Calu3 (cell line): ENCODE measurements at regions of chr1 and their contacts with region 1.

Region 1: DNA sequence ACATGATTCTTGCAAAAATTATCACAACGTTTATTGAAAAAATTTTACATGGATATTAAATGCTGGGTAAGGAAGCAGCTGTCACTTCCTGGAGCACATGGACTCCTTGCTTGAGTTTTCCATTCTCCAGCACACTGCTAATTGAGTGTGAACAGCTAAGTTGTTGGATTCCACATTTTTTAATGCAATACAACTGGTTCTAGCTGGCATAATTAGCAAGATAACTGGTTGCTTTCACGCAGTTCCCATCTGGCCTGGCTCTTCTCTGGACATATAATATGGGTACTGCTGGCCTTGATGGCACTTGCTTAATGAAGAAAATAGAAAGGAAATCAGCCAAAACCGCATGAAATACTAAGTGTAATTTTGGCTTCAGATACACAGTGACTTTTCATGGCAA is 26.6 kb downstream of the RGS21 start:
- DNase-seq: no peak
- H3K4me3 Mint-ChIP-seq: no peak overlapping the region
- H3K27ac Mint-ChIP-seq: no peak overlapping the region
- H3K4me1 Mint-ChIP-seq: no peaks in the 10 kb centered on the region
- H3K27me3 Mint-ChIP-seq: no peaks in the 10 kb centered on the region
- CTCF ChIP-seq: no peak

Region 2: DNA sequence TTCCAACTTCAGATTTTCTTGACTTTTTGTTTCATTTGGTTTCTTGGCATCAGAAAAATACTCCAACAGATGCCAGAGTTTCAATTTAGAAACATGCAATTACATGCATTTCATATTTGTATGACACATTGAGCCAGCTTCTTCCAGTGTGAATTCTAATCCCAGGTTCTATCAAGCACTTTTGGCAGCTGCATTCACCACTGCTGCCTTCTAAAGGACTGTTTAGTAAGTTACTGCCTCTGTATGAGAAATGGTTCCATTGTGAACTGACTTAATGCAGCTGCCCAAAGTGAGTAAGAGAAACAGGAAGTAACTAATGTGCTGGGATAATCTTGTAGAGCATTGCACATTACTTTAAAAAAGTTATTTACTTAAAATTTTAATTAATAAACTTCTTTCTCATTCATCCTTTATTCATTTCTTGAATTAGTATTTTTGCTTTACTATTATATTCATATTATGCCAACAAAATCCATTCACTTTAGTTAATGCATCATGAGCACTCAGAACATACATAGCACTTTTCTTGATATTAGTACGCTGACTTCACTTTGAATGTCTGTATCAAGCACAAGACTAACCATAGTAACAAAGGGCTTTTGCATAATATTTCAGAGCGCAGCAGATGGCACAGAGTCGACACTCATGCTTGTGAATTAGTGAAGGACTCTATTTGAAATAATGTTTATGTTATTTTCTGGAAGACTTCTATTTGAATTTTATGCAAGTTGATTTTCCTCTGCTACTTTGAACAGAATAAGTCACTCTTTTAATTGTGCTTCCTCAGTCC is 175.2 kb before region 1 on chr1:
- CTCF ChIA-PET with region 1: no interaction called
- intact Hi-C with region 1: no loop called
- DNase-seq: no peak
- H3K4me3 Mint-ChIP-seq: no peak overlapping the region
- H3K27ac Mint-ChIP-seq: no peak overlapping the region
- H3K4me1 Mint-ChIP-seq: no peaks in the 10 kb centered on the region
- H3K27me3 Mint-ChIP-seq: no peaks in the 10 kb centered on the region
- CTCF ChIP-seq: no peak

Region 3: DNA sequence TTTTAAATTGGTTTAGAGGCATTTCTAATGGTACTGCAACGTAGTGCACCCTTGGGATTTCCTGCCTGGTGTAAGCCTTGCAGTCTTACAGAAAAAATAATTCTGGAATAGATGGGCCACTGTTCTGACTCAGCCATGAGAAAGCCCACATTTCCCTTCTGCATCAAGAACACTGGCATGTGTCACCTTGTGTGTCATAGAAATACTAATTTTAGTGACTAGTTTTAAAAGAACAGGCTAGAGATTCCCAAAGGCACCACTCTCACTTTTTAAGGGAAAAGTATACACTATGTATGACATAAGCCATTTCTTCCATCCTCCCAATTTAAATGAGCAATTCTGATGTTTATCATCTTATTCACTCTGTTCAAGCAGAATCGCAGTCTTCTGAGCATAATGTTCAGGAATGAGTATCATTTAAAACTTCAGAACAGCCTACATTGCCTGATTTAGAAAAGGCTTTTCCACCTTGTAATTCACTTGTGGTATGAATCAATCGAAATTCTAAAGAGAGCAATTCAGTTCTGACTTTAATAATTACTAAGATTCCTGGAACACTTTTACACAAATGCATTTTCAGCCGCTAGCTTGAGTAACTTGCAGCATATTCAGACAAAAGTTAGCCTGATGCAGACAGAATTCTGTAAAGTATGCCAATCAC is 311.4 kb after region 1 on chr1:
- CTCF ChIA-PET with region 1: no interaction called
- intact Hi-C with region 1: loop called (anchors 5 kb)
- DNase-seq: no peak
- H3K4me3 Mint-ChIP-seq: no peak overlapping the region
- H3K27ac Mint-ChIP-seq: no peak overlapping the region
- H3K4me1 Mint-ChIP-seq: no peaks in the 10 kb centered on the region
- H3K27me3 Mint-ChIP-seq: no peaks in the 10 kb centered on the region
- CTCF ChIP-seq: no peak